ENCODE measurements at regions of chr1 and their contacts with region 1.

Region 1: GRCh38 chr1:30837653-30838052 is 70.9 kb downstream of the SDC3 start:
- DNase-seq: no peak

Region 2: DNA sequence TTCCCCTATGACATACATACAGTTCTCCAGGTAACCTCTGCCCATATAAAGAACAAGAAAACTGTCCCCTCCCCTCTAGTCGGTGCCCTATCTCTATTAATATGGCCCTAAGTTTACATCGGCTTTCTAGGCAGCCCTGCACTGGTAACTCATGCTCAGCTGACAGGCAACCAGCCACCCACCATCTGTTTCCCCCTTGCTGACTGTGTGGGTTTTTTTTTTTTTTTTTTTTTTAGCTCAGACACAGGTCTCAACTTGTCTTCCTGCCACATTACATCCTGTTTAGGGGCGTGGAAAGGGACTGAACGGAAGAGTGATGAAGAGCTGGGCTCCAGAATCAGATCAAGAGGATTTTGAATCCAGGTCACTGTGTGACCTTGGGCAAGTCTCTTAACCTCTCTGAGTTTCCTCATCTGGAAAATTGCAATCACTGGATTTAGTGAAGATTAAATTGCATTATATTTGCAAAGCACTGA is 94.0 kb before region 1 on chr1:
- in situ Hi-C with region 1: loop called (anchors 5 kb)
- DNase-seq: no peak

Measured in G401 (cell line).